Naive thymus-derived CD4-positive, alpha-beta T cell (primary cell): ENCODE measurements at regions of chr9 and their contacts with region 1.

Region 1: GRCh38 chr9:131559421-131560000 is 14.2 kb downstream of the PRRT1B start:
- DNase-seq: peak in 1 of 9 donors; percentile 20
- ATAC-seq: no peak
- H3K4me3 ChIP-seq: no peak overlapping the region
- H3K4me3 Mint-ChIP-seq: no peak overlapping the region
- H3K27ac ChIP-seq: no peak overlapping the region
- H3K27ac Mint-ChIP-seq: no peak overlapping the region
- H3K4me1 ChIP-seq: no peaks in the 10 kb centered on the region
- H3K4me1 Mint-ChIP-seq: peaks cover 0 to 6% (median 3%) of the 10 kb centered on the region in 7 donors
- H3K27me3 ChIP-seq: no peaks in the 10 kb centered on the region
- H3K27me3 Mint-ChIP-seq: peaks cover 10 to 22% (median 17%) of the 10 kb centered on the region in 5 donors

Region 2: DNA sequence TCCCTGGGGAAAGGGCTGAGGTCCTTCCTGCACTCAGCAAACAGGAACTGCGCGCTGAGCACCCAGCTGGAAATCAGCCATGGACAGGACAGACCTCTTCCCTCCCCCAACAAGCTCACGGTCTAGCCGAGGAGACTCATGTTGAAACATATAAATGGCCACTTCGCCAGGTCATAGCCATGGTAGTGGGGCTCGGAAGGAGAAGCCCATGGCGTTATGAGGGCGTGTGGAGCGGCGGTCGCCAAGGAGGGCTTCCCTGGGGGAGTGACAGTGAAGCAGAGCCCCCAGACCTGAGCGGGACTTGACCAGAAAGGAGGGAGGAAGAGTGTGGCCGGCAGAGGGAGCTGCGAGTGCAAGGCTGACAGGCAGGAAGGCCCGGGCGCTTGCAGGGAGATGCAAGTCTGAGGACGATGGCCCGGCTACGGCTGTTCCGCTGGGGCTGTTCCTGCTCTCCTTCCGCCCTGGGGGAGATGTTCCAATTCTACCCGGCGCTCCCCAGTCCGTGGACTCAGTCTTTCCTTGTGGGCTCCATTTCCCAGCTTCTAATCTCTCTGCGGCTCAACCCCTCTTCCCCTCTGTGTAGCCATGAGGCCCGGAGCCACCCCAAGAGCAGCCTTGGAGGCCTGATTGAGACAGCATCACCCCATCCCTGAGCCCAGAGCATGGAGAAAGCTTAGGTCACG is 209.5 kb before region 1 on chr9:
- CTCF ChIA-PET with region 1: interaction called, 10 read pairs
- POLR2A ChIA-PET with region 1: interaction called, 4 read pairs
- intact Hi-C with region 1: loop called in 1 of 2 experiments (anchors 1 kb)
- DNase-seq: peak; percentile 74 to 87 (median 82)
- ATAC-seq: peak; percentile 99
- H3K4me3 ChIP-seq: no peak overlapping the region
- H3K4me3 Mint-ChIP-seq: peak overlapping the region in 8 of 10 donors; percentile 12 to 80 (median 57)
- H3K27ac ChIP-seq: no peak overlapping the region
- H3K27ac Mint-ChIP-seq: peak overlapping the region in 5 of 9 donors; percentile 65 to 78 (median 70)
- H3K4me1 ChIP-seq: peaks cover 4 to 9% of the 10 kb centered on the region in 2 donors
- H3K4me1 Mint-ChIP-seq: peaks cover 0 to 15% (median 8%) of the 10 kb centered on the region in 7 donors
- H3K27me3 ChIP-seq: no peaks in the 10 kb centered on the region
- H3K27me3 Mint-ChIP-seq: peaks cover 0 to 5% (median 0%) of the 10 kb centered on the region in 5 donors